PC-9 (cell line): ENCODE measurements at regions of chrX and their contacts with region 1.

Region 1: GRCh38 chrX:138945223-138945622 is 233.7 kb upstream of the FGF13 start:
- DNase-seq: peak; percentile 10 to 37
- H3K4me3 ChIP-seq: no peak overlapping the region
- H3K27ac ChIP-seq: no peak overlapping the region
- H3K4me1 ChIP-seq: peaks cover 13% of the 10 kb centered on the region
- H3K27me3 ChIP-seq: no peaks in the 10 kb centered on the region
- CTCF ChIP-seq: no peak

Region 2: GRCh38 chrX:138745196-138745595 is 200.0 kb before region 1 on chrX:
- CTCF ChIA-PET with region 1: no interaction called
- POLR2A ChIA-PET with region 1: no interaction called
- intact Hi-C with region 1: no loop called
- DNase-seq: peak in 1 of 2 experiments; percentile 7
- H3K4me3 ChIP-seq: no peak overlapping the region
- H3K27ac ChIP-seq: no peak overlapping the region
- H3K4me1 ChIP-seq: no peaks in the 10 kb centered on the region
- H3K27me3 ChIP-seq: no peaks in the 10 kb centered on the region
- CTCF ChIP-seq: peak; percentile 85

Region 3: DNA sequence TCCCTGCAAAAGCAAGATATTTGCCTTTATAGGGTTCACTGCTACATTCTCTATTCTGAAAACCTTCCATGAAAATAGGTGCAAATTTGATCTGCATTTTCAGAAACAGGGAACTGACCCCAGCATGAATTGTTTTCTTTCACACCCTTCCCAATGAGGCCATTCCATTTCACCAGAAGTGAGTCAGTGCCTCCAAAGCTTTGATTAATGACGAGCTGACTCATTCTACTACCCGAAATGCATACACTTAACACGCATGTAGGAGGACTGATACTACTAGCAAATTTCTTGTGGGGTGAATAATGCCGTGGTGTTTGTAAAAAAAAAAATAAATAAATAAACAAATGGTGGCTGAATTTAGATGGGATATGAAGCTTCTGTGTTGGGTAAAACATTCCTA is 86.8 kb before region 1 on chrX:
- CTCF ChIA-PET with region 1: no interaction called
- POLR2A ChIA-PET with region 1: no interaction called
- intact Hi-C with region 1: loop called (anchors 5 kb)
- DNase-seq: peak; percentile 1 to 49
- H3K4me3 ChIP-seq: no peak overlapping the region
- H3K27ac ChIP-seq: peak overlapping the region; percentile 71
- H3K4me1 ChIP-seq: peaks cover 26% of the 10 kb centered on the region
- H3K27me3 ChIP-seq: no peaks in the 10 kb centered on the region
- CTCF ChIP-seq: no peak

Region 4: DNA sequence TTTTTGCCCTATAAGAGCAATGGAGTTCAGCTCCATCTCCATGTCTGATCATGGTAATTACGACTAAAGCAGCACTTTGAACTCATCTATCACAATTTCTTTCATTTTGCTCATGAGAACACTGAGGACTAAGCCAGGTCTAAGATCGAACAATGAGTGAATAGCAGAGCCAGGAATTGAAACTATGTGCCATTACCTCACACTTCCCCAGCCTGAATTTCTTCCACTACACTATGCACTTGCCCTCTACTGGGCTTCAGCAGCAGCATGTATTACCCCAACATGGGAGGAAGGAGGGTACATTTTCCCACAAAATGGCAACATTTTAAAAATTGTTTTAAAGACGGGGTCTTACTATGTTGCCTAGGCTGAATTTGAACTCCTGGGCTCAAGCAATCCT is 41.0 kb after region 1 on chrX:
- CTCF ChIA-PET with region 1: no interaction called
- POLR2A ChIA-PET with region 1: no interaction called
- intact Hi-C with region 1: loop called (anchors 5 kb)
- DNase-seq: no peak
- H3K4me3 ChIP-seq: no peak overlapping the region
- H3K27ac ChIP-seq: no peak overlapping the region
- H3K4me1 ChIP-seq: peaks cover 17% of the 10 kb centered on the region
- H3K27me3 ChIP-seq: no peaks in the 10 kb centered on the region
- CTCF ChIP-seq: no peak

Region 5: GRCh38 chrX:139063364-139063763 is 118.1 kb after region 1 on chrX:
- CTCF ChIA-PET with region 1: no interaction called
- POLR2A ChIA-PET with region 1: no interaction called
- intact Hi-C with region 1: no loop called
- DNase-seq: no peak
- H3K4me3 ChIP-seq: no peak overlapping the region
- H3K27ac ChIP-seq: no peak overlapping the region
- H3K4me1 ChIP-seq: peaks cover 35% of the 10 kb centered on the region
- H3K27me3 ChIP-seq: no peaks in the 10 kb centered on the region
- CTCF ChIP-seq: no peak